Activated CD8-positive, alpha-beta T cell treated with anti-CD3 and anti-CD28 coated beads for 36 hours (primary cell): ENCODE measurements at regions of chr6 and their contacts with region 1.

Region 1: GRCh38 chr6:32868257-32868788 is 14.3 kb downstream of the PSMB9 start:
- DNase-seq: peak; percentile 95
- ATAC-seq: peak; percentile 78
- H3K4me3 Mint-ChIP-seq: no peak overlapping the region
- H3K27ac Mint-ChIP-seq: no peak overlapping the region
- H3K4me1 Mint-ChIP-seq: peaks cover 32% of the 10 kb centered on the region
- H3K27me3 Mint-ChIP-seq: no peaks in the 10 kb centered on the region
- CTCF ChIP-seq: peak; percentile 92

Region 2: DNA sequence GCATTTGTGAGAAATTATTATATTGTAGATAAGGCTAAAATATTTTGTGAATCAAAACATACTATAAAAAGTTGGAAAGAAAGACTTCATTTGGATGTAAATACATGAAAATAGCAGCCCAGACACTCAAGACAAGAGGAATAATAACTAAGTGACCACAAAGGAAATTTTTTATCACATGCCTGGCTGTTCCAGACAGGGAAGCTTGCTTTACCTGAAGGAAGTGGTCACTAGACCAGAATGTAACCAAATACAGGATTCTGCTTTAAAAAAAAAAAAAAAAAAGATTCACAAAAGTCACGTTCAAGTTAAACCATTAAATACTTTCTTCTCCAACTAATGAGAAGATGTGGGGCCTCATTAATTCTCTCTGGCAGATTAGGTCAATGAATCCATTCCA is 95.7 kb before region 1 on chr6:
- CTCF ChIA-PET with region 1: no interaction called
- POLR2A ChIA-PET with region 1: no interaction called
- intact Hi-C with region 1: no loop called
- DNase-seq: no peak
- ATAC-seq: no peak
- H3K4me3 Mint-ChIP-seq: no peak overlapping the region
- H3K27ac Mint-ChIP-seq: no peak overlapping the region
- H3K4me1 Mint-ChIP-seq: no peaks in the 10 kb centered on the region
- H3K27me3 Mint-ChIP-seq: peaks cover 23% of the 10 kb centered on the region
- CTCF ChIP-seq: no peak

Region 3: DNA sequence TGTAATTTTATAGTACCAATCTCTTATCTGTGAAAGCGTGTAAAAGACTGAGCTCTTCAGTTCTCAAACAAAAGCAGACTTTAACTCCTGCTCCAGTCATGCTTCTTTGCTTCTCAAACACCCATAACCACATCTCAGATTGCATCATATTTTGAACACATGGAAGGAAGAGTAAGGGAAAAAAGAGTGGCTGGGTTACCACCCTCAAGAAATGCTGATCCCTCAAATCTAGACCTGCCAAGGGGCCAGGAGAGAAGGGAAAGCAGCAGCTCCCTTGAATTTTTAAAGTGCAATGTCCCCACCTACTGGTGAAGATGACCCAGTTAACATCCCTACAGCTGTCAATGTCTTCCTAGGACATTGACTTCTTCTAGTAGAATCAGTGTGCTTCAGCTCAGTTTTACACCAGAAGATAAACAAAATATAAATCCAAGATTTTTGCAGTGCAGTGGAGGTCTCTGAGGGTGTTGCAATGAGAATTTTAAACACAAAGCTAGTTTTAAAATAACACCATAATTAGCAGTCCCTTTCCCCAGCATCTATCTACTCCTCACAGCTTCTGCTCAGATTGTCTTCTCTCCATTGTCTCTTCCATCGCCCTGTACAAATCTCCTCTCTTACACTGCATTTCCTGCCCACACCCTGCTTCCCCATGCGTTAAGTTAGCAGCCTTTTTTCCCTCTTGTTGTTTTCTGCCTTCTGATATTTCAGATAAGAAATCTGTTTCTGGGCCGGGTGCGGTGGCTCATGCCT is 82.4 kb before region 1 on chr6:
- CTCF ChIA-PET with region 1: interaction called, 18 read pairs
- POLR2A ChIA-PET with region 1: no interaction called
- intact Hi-C with region 1: no loop called
- DNase-seq: peak; percentile 40
- ATAC-seq: peak; percentile 67
- H3K4me3 Mint-ChIP-seq: no peak overlapping the region
- H3K27ac Mint-ChIP-seq: no peak overlapping the region
- H3K4me1 Mint-ChIP-seq: no peaks in the 10 kb centered on the region
- H3K27me3 Mint-ChIP-seq: peaks cover 34% of the 10 kb centered on the region
- CTCF ChIP-seq: peak; percentile 74

Region 4: GRCh38 chr6:32825966-32826365 is 42.4 kb before region 1 on chr6:
- CTCF ChIA-PET with region 1: interaction called, 42 read pairs
- POLR2A ChIA-PET with region 1: interaction called, 3 read pairs
- intact Hi-C with region 1: loop called (anchors 5 kb)
- DNase-seq: no peak
- ATAC-seq: no peak
- H3K4me3 Mint-ChIP-seq: no peak overlapping the region
- H3K27ac Mint-ChIP-seq: no peak overlapping the region
- H3K4me1 Mint-ChIP-seq: peaks cover 37% of the 10 kb centered on the region
- H3K27me3 Mint-ChIP-seq: no peaks in the 10 kb centered on the region
- CTCF ChIP-seq: peak; percentile 16

Region 5: GRCh38 chr6:32853541-32854375 is 14.6 kb before region 1 on chr6 and contains the starts of genes PSMB9 and TAP1:
- CTCF ChIA-PET with region 1: interaction called, 80 read pairs
- POLR2A ChIA-PET with region 1: interaction called, 18 read pairs
- intact Hi-C with region 1: loop called (anchors 2 kb)
- DNase-seq: peak; percentile 99
- ATAC-seq: peak; percentile 84
- H3K4me3 Mint-ChIP-seq: peak within 1 kb of the TSS; percentile 94
- H3K27ac Mint-ChIP-seq: peak within 1 kb of the TSS; percentile 100
- H3K4me1 Mint-ChIP-seq: peaks cover 52% of the 10 kb centered on the region
- H3K27me3 Mint-ChIP-seq: no peaks in the 10 kb centered on the region
- CTCF ChIP-seq: peak; percentile 67
- total RNA-seq, gene PSMB9: 219 to 229 TPM
- total RNA-seq, gene TAP1: 210 to 211 TPM

Region 6: DNA sequence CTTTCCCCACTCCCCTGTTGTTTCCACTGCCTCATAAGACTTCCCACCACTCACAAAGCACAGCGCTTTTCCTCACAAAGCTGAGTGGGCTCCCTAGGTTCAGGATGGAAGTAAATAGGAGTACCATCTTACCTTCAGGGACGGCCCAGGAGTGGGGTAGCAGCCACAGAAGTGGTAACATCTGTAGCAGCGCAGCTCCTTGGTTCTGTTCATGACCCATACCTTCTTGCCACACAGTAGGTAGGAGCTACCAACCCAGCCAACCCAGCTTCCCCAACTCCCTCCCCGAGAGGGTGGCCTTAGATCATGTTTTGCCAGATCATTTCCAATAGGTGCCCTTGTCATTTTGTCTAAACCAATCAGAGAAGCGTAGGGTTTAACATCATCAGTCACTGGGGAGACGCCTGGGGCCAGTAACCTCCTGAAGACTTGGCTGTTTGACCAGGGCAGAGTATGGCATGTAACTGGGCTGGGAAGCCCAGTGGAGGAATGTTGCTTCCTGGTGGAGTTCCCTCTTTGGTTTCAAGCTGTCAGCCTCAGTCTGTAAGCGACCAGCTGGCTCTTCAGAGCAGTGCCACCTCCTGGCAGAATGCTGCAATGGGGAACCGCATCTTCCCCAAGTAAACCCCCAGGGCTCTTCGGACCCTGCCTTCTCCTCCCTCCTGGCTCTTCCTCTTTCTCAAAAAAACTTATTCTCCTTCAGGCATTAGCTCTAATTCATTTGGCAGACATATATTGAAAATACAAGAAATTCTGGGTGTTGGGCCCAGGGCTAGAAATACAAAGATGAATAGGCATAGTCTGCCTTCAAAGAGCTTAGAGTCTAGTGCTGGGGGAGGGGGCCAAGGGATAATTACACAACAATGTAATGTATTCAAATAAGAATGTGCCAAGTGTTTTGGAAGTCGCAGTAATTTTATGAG is 84.8 kb after region 1 on chr6 and contains the start of gene HLA-DMA:
- CTCF ChIA-PET with region 1: interaction called, 40 read pairs
- POLR2A ChIA-PET with region 1: interaction called, 5 read pairs
- intact Hi-C with region 1: no loop called
- DNase-seq: peak; percentile 83
- ATAC-seq: peak; percentile 96
- H3K4me3 Mint-ChIP-seq: peak within 1 kb of the TSS; percentile 76
- H3K27ac Mint-ChIP-seq: peak within 1 kb of the TSS; percentile 77
- H3K4me1 Mint-ChIP-seq: peaks cover 65% of the 10 kb centered on the region
- H3K27me3 Mint-ChIP-seq: no peaks in the 10 kb centered on the region
- CTCF ChIP-seq: peak; percentile 98
- total RNA-seq, gene HLA-DMA: 16.2 TPM